ENCODE measurements at regions of chr4 and their contacts with region 1.

Region 1: GRCh38 chr4:155371432-155372043 is 5.2 kb downstream of the MAP9 start:
- DNase-seq: peak; percentile 54
- H3K4me3 ChIP-seq: no peak overlapping the region
- H3K27ac ChIP-seq: no peak overlapping the region
- H3K4me1 ChIP-seq: peaks cover 11% of the 10 kb centered on the region
- CTCF ChIP-seq: peak; percentile 87

Region 2: DNA sequence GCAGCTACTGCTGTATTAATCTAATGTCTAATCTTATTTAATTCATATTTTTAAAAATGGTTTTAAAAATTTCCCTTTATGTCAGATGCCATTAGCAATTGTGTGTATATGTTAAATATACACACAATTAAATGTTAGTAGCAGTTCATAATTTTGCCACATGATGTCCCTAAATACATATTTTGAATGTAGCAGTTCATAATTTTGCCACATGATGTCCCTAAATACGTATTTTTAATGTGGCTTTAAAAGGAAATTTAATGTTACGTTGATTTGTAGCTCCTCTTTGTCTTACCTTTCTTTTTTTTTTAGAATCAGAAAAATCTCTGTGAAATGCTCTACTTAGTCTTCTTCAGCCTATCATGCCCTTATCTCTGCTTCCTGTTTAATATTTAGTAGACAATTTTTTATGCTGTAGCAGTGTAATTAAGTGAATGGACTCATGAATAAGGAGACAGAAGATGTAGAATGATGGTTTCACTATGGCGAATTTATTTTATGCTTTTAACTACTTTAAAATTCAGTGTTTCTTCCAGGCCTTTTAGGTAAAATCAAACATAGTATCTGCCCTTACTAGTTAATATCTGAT is 564.4 kb before region 1 on chr4:
- CTCF ChIA-PET with region 1: no interaction called
- POLR2A ChIA-PET with region 1: no interaction called
- intact Hi-C with region 1: loop called (anchors 5 kb)
- DNase-seq: peak; percentile 49
- H3K4me3 ChIP-seq: no peak overlapping the region
- H3K27ac ChIP-seq: no peak overlapping the region
- H3K4me1 ChIP-seq: no peaks in the 10 kb centered on the region
- CTCF ChIP-seq: peak; percentile 95

Region 3: DNA sequence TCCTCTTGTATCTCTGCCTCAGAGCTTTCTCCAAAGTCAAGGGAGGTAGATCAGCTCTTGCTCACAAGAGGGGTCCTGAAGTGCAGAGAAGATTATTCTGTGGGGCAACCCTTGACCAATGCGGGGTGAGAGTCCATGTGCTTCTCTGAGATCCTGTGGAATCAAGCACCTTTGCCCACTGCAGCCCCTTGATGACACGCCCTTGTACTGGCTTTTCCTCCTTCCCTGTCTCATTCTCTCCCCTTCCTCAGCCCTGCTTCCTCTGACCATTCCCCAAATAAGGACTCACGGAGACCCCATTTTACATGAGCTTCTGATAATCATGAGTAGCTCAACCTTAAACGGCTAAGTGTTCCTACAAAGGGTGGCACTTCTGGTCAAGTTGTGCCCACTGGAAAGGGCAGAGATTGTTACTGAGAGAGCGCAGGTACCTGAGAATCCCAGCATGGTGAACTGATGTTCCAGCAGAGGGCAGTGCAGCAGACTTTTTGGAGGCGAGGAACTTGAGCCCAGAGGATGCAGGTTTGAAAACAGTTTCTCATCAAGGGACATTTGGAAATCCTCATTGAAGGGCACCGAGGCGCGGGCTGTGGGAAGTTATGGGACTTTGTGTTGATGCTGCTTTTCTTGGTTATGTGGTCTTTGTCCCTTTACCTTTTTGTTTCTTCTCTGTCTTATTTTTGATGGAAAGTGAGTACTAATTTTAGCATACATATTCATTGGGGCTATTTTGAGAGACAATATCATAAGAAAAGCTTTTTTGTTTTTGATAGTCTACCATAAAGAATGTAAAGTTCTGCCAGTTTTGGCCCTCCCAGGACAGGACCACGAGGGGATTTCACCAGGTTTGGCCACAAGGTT is 389.1 kb before region 1 on chr4:
- CTCF ChIA-PET with region 1: no interaction called
- POLR2A ChIA-PET with region 1: no interaction called
- intact Hi-C with region 1: loop called (anchors 5 kb)
- DNase-seq: peak; percentile 37
- H3K4me3 ChIP-seq: no peak overlapping the region
- H3K27ac ChIP-seq: no peak overlapping the region
- H3K4me1 ChIP-seq: no peaks in the 10 kb centered on the region
- CTCF ChIP-seq: peak; percentile 78